ENCODE measurements at regions of chr3 and their contacts with region 1.

Region 1: DNA sequence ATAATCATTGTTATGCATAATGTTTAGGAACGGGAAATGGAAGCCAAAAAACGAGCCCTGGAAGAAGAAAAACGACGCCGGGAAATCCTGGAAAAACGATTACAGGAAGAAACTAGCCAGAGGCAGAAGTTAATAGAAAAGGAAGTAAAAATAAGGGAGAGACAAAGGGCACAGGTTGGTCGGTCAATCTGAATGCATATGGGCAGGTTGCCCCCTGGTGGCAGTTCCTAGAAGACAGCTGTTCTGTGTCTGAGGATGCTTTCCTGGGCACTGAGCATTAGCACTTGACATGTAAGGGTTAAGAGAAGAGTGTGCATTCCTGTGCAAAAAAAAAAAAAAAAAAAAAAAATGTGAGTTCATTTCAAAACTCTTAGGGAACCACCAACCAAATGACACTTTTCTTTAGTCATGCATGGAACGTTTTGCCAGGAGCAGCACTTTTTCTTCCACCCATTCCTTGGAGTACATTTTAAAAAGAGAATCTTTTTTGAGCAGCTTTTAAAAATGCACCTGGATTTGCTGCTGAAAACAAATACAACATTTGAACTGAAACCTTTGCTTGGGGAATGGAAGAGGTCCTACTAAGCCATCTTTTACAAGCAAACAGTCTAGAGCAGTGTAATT is 11.1 kb upstream of the ABHD10 start:
- H3K4me3 ChIP-seq: no peak overlapping the region
- H3K27ac ChIP-seq: no peak overlapping the region
- H3K4me1 ChIP-seq: no peaks in the 10 kb centered on the region
- CTCF ChIP-seq: peak; percentile 55; the same call in 1 of the 2 replicates

Region 2: GRCh38 chr3:111851511-111851954 is 116.2 kb before region 1 on chr3:
- CTCF ChIA-PET with region 1: interaction called, 10 read pairs
- POLR2A ChIA-PET with region 1: no interaction called
- H3K4me3 ChIP-seq: no peak overlapping the region
- H3K27ac ChIP-seq: no peak overlapping the region
- H3K4me1 ChIP-seq: no peaks in the 10 kb centered on the region
- CTCF ChIP-seq: no peak

Region 3: GRCh38 chr3:111895079-111895478 is 72.7 kb before region 1 on chr3:
- CTCF ChIA-PET with region 1: interaction called, 40 read pairs
- POLR2A ChIA-PET with region 1: no interaction called
- H3K4me3 ChIP-seq: no peak overlapping the region
- H3K27ac ChIP-seq: no peak overlapping the region
- H3K4me1 ChIP-seq: no peaks in the 10 kb centered on the region
- CTCF ChIP-seq: no peak

Region 4: GRCh38 chr3:111924283-111924682 is 43.5 kb before region 1 on chr3:
- CTCF ChIA-PET with region 1: no interaction called
- POLR2A ChIA-PET with region 1: no interaction called
- H3K4me3 ChIP-seq: no peak overlapping the region
- H3K27ac ChIP-seq: no peak overlapping the region
- H3K4me1 ChIP-seq: no peaks in the 10 kb centered on the region
- CTCF ChIP-seq: no peak

Region 5: GRCh38 chr3:111978493-111979433 is 11.0 kb after region 1 on chr3 and contains the start of gene ABHD10:
- CTCF ChIA-PET with region 1: interaction called, 16 read pairs
- POLR2A ChIA-PET with region 1: interaction called, 6 read pairs
- H3K4me3 ChIP-seq: peak within 1 kb of the TSS; percentile 89
- H3K27ac ChIP-seq: peak within 1 kb of the TSS; percentile 45
- H3K4me1 ChIP-seq: no peaks in the 10 kb centered on the region
- CTCF ChIP-seq: no peak

Region 6: DNA sequence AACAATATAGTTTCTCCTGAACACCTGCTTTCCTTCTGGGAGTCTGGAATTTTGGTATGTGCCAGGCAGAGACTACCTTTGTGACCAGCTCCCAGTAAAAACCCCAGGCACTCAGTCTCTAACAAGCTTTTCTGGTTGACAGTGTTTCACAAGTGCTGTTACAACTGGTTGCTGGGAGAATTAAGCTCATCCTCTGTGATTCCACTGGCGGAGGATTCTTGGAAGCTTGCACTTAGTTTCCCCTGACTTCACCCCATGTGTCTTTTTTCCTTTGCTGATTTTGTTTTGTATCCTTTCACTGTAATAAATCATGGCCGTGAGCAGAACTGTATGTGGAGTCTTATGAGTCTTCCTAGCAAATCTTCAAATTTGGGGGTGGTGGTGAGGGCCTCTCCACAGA is 25.3 kb after region 1 on chr3:
- CTCF ChIA-PET with region 1: no interaction called
- POLR2A ChIA-PET with region 1: no interaction called
- H3K4me3 ChIP-seq: no peak overlapping the region
- H3K27ac ChIP-seq: no peak overlapping the region
- H3K4me1 ChIP-seq: no peaks in the 10 kb centered on the region
- CTCF ChIP-seq: no peak